ENCODE measurements at regions of chr14 and their contacts with region 1.

Region 1: GRCh38 chr14:35404449-35405303 is at the start of gene NFKBIA:
- DNase-seq: peak; percentile 93
- H3K4me3 Mint-ChIP-seq: peak within 1 kb of the TSS; percentile 99
- H3K27ac Mint-ChIP-seq: peak within 1 kb of the TSS; percentile 97
- H3K4me1 Mint-ChIP-seq: peaks cover 43% of the 10 kb centered on the region
- H3K27me3 Mint-ChIP-seq: no peaks in the 10 kb centered on the region
- total RNA-seq, gene NFKBIA: 386 and 390 TPM in 2 replicates

Region 2: GRCh38 chr14:34982417-34983147 is 422.1 kb before region 1 on chr14 and contains the start of gene SRP54:
- intact Hi-C with region 1: loop called (anchors 2 kb)
- DNase-seq: peak; percentile 100
- H3K4me3 Mint-ChIP-seq: no peak within 1 kb of the TSS
- H3K27ac Mint-ChIP-seq: no peak within 1 kb of the TSS
- H3K4me1 Mint-ChIP-seq: peaks cover 20% of the 10 kb centered on the region
- H3K27me3 Mint-ChIP-seq: no peaks in the 10 kb centered on the region
- total RNA-seq, gene SRP54: 78.9 and 82.4 TPM in 2 replicates

Region 3: DNA sequence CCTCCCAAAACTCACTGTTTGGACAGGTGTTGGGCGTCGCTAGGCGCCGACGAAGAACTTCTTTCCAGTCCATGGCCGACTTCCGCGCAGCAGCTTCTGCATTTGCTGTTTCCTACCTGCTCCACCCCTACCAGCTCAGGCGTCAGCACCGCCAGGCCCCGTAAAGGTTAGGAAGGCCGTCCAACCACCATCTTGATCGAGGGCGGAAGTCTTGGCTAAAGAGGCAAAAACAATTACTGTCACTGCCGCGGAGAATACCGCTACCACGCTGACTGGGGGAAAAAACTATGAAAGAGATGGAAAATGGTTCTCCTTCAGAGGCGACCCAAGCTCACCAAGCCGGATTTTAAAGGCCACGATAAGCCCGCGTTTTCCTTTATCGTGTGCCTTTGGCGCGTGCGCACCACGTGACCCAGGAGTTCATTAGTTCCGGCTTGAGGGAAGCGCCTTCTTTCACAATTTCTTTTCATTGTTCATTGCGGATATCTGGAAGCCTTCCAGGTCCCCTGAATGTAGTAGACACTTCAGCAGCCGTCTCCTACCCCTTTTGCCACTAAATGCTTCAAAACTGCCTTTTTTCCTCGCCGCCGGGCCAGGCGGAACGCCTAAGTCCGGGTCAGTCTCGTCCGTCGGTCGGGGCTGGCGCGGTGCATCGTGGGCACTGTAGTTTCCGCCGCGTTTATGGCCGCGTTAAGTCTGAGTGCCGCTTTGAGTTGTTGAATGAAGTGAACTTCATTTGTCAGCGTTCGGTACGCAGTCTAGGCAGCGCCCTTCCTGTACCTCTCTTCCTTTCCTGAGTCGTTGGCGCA is 282.6 kb before region 1 on chr14 and contains the starts of genes PPP2R3C and PRORP:
- intact Hi-C with region 1: loop called (anchors 2 kb)
- DNase-seq: peak; percentile 88
- H3K4me3 Mint-ChIP-seq: peak within 1 kb of the TSS; percentile 96
- H3K27ac Mint-ChIP-seq: peak within 1 kb of the TSS; percentile 100
- H3K4me1 Mint-ChIP-seq: peaks cover 41% of the 10 kb centered on the region
- H3K27me3 Mint-ChIP-seq: no peaks in the 10 kb centered on the region
- total RNA-seq, gene PPP2R3C: 48.1 and 49.7 TPM in 2 replicates
- total RNA-seq, gene PRORP: 37.0 and 41.3 TPM in 2 replicates

Region 4: DNA sequence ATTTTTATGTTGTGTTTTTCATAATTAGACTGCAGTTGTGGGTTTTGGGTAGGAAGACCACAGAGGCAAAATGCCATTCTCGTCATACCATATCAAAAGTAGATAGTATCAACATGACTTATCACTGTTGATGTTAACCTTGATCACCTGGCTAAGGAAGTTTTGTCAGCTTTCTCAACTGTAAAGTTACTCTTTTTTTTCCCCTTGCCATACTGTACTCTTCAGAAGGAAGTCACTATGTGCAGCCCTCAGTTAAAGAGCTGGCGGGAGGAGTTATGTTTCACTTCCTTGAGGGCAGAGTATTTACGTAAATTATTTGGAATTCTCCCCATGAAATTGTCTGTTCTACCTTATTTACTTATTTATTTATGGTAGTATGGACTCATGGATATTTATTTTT is 203.6 kb before region 1 on chr14:
- intact Hi-C with region 1: loop called (anchors 2 kb)
- DNase-seq: no peak
- H3K4me3 Mint-ChIP-seq: peak overlapping the region; percentile 22
- H3K27ac Mint-ChIP-seq: peak overlapping the region; percentile 54
- H3K4me1 Mint-ChIP-seq: peaks cover 45% of the 10 kb centered on the region
- H3K27me3 Mint-ChIP-seq: no peaks in the 10 kb centered on the region

Region 5: GRCh38 chr14:35285168-35286002 is 119.3 kb before region 1 on chr14:
- intact Hi-C with region 1: loop called (anchors 1 kb)
- DNase-seq: no peak
- H3K4me3 Mint-ChIP-seq: peak overlapping the region; percentile 55
- H3K27ac Mint-ChIP-seq: peak overlapping the region; percentile 82
- H3K4me1 Mint-ChIP-seq: peaks cover 41% of the 10 kb centered on the region
- H3K27me3 Mint-ChIP-seq: no peaks in the 10 kb centered on the region

Region 6: GRCh38 chr14:35320472-35320871 is 84.2 kb before region 1 on chr14:
- intact Hi-C with region 1: loop called (anchors 1 kb)
- DNase-seq: no peak
- H3K4me3 Mint-ChIP-seq: no peak overlapping the region
- H3K27ac Mint-ChIP-seq: no peak overlapping the region
- H3K4me1 Mint-ChIP-seq: peaks cover 4% of the 10 kb centered on the region
- H3K27me3 Mint-ChIP-seq: no peaks in the 10 kb centered on the region

Region 7: DNA sequence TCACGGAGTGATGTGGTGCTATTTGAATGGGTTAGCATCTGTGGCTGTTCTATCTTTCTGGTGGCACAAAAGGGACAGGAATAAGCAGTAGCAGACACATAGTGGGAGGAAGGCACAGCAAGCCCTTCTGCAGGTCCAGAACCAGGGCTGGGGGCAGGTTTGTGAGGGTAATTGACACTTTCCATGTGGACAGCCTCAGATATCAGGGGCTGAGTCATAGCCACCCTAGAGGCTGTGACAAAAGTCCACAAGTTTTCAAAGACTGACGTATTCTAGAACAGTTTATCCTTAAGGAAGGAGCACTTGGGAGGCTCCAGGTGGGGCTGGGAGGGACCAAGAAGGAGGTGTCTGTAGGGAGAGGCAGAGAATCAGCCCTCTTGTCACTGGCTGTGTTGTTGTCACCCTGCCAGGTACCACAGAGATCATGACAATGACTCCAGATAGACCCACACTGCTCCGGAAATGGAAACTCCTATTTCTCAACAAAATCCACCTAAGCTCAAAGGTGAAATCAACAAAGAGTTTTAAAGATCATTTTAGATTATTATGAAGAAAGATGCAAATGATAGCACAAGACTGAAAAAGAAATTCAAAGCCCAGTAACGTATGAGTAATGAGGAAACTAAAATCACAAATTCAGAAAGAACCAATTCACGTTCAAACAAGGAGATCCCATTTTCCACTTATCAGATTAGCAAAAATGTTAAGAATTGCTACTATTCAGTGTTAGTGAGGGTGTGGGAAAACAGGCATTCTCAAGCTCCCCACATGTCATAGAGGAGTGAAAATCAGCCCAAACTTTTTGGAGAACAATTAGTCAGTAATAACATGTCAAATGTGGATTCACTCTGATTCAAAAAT is 48.5 kb before region 1 on chr14:
- intact Hi-C with region 1: loop called (anchors 1 kb)
- DNase-seq: no peak
- H3K4me3 Mint-ChIP-seq: peak overlapping the region; percentile 0
- H3K27ac Mint-ChIP-seq: peak overlapping the region; percentile 87
- H3K4me1 Mint-ChIP-seq: peaks cover 29% of the 10 kb centered on the region
- H3K27me3 Mint-ChIP-seq: no peaks in the 10 kb centered on the region

Measured in activated T-helper 2 cell treated with anti-CD3 and anti-CD28 coated beads, Interferon-gamma antibody, Interleukin-2, Interleukin-4, amounts not matched to agents 10 μg/mL and 5 μg/mL and 100 μg/mL, durations not matched to agents 14 hours and 24 hours and 36 hours (primary cell).